Breast epithelium (tissue), 4 donors: ENCODE measurements at regions of chr1 and their contacts with region 1.

Region 1: DNA sequence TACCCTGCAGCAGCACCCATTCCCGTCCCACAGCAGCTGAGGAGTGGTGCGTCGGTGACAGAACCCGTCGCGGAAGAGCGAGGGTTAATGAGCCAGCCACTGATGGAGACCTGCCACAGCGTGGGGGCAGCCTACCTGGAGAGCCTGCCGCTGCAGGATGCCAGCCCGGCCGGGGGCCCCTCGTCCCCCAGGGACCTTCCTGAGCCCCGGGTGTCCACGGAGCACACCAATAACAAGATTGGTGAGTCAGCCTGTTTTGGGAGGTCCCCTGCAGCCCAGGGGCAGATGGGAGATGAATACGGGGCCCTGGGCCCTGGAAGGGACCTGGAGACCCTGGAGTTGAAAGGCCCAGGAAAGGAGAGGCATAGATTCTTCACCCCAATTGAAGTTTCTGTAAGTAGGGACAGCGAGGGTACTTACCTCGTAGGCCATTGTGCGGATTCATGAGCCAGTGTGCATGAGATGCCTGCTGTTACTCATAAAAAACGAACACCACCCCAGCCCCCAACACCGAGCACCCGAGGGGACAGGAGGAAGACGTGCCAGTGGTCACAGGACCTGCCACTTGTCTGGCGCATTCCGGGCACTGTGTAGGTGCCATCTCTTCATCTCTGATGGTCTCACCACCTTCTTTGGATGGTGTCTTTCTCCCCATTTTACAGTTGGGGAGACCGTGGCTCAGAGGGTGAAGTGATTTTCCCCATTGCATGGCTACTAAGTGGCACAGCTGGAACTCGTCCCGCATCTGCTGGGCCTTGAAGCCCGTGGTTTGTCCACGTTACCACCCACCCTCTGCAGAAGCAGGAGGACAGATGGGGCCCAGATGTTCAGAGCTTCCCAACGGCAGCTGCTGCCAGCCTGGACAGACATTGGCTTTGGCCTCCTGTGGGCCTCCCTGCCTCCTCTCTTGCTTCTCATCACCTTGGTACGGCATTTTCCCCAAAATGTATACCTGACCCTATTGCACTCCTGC is 28.3 kb upstream of the TNFRSF1B start:
- DNase-seq: no peak
- H3K4me3 ChIP-seq: no peak overlapping the region
- H3K27ac ChIP-seq: no peak overlapping the region
- H3K4me1 ChIP-seq: no peaks in the 10 kb centered on the region
- H3K27me3 ChIP-seq: no peaks in the 10 kb centered on the region
- CTCF ChIP-seq: no peak
- POLR2A ChIP-seq: no peak

Region 2: DNA sequence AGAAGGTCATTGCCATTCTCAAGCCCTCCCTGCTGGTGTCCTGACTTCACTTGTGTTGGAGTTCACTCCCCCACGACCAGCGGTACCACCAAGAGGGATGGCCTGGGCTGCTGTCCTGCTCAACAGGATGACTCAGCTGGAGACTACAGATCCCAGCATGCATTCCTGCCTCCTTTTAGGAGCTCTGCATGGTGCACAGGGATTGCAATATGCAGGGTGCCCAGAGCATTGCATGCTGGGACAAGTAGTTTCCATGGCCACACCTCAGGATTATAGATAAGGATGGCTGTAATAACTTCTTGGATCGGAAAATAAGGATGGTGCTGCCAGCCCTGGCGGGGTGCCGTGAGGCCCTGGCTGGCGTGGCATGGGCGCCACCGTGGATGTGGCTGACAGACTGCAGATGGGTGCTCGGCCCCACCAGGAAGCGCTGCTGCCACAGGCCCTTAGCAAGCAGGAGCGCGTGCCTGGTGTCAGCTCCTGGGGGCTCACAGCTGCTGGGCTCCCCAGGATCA is 1492.1 kb before region 1 on chr1:
- intact Hi-C with region 1: no loop called
- DNase-seq: no peak
- H3K4me3 ChIP-seq: no peak overlapping the region
- H3K27ac ChIP-seq: no peak overlapping the region
- H3K4me1 ChIP-seq: no peaks in the 10 kb centered on the region
- H3K27me3 ChIP-seq: no peaks in the 10 kb centered on the region
- CTCF ChIP-seq: no peak
- POLR2A ChIP-seq: no peak

Region 3: DNA sequence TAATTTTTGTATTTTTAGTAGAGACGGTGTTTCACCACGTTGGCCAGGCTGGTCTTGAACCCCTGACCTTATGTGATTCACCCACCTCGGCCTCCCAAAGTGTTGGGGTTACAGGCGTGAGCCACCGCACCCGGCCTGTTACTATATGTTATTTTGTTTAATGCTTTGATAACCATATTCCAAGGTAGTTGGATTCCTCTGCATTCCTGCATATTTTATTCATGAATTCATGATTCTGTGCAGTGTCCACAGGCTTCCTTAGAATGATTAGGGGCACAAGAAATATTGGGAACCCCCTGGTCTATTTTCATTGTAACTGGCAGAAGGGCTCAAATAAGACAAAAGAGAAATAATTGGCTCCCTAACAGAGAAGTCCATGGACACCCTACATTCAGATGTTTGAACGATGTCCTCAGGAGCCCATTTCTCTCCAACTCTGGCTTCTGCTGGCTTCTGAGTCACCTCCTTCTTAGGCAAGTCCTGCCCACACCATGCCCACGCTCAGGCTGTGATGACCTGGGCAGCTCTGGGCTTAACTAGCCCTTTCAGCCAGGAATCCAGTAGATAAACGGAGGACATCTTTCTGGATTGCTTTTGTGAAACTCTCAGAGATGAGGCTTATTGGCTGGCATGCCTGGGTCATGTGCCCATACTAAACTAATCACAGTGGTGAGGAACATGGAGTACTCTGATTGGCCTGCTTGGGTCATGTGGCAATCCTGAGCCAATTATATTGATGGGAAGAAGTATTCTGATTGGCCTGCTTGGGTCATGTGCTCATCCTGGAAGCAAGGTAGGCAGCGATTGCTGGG is 42.8 kb before region 1 on chr1:
- intact Hi-C with region 1: loop called (anchors 2 kb)
- DNase-seq: no peak
- H3K4me3 ChIP-seq: no peak overlapping the region
- H3K27ac ChIP-seq: no peak overlapping the region
- H3K4me1 ChIP-seq: no peaks in the 10 kb centered on the region
- H3K27me3 ChIP-seq: no peaks in the 10 kb centered on the region
- CTCF ChIP-seq: no peak
- POLR2A ChIP-seq: no peak

Region 4: GRCh38 chr1:12208764-12209494 is 70.4 kb after region 1 on chr1:
- intact Hi-C with region 1: no loop called
- DNase-seq: peak; percentile 73 to 86
- H3K4me3 ChIP-seq: no peak overlapping the region
- H3K27ac ChIP-seq: peak overlapping the region in 1 of 2 donors; percentile 12
- H3K4me1 ChIP-seq: no peaks in the 10 kb centered on the region
- H3K27me3 ChIP-seq: no peaks in the 10 kb centered on the region
- CTCF ChIP-seq: peak; percentile 94 to 97 (median 95)
- POLR2A ChIP-seq: no peak